Endothelial cell of umbilical vein (primary cell): ENCODE measurements at regions of chr12 and their contacts with region 1.

Region 1: GRCh38 chr12:54526812-54527630 is 22.4 kb upstream of the PDE1B start:
- DNase-seq: peak; percentile 40
- H3K4me3 ChIP-seq: no peak overlapping the region
- H3K27ac ChIP-seq: no peak overlapping the region
- H3K4me1 ChIP-seq: no peaks in the 10 kb centered on the region
- H3K27me3 ChIP-seq: peaks cover 32 to 34% of the 10 kb centered on the region in 2 experiments
- CTCF ChIP-seq: peak; percentile 69
- POLR2A ChIP-seq: no peak

Region 2: DNA sequence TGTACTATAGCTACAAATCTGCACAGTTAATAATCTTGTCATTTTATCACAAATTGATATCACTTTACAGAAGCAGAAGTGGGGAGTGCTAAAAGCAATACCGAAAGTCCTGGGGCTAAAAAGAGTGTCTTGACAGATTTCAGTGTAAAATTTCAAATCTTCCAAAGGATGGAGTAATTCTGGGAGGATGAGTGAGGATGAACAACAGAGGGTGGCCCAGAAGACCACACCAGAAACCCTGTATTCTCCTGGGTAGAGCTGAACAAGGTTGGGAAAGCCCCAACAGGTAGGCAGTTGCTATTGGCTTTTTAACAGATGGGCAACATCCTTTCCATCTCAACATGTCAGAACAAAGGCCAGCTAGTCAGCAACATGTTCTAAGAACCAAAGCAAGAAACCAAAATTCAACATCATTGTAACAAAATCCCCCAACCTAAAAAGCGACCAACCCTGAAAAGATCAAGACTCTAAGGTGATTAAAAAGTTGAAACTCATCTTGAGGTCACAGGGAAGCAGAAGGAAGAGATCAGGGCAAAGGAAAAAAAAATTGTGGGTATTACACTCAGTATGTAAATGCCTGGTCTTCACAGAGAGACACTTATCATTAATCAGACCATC is 285.9 kb before region 1 on chr12:
- CTCF ChIA-PET with region 1: no interaction called
- POLR2A ChIA-PET with region 1: no interaction called
- dilution Hi-C with region 1: no loop called
- intact Hi-C with region 1: no loop called
- DNase-seq: no peak
- H3K4me3 ChIP-seq: no peak overlapping the region
- H3K27ac ChIP-seq: no peak overlapping the region
- H3K4me1 ChIP-seq: no peaks in the 10 kb centered on the region
- H3K27me3 ChIP-seq: no peaks in the 10 kb centered on the region
- CTCF ChIP-seq: no peak
- POLR2A ChIP-seq: no peak

Region 3: GRCh38 chr12:54538136-54538700 is 11.2 kb after region 1 on chr12:
- CTCF ChIA-PET with region 1: interaction called, 10 read pairs
- POLR2A ChIA-PET with region 1: no interaction called
- dilution Hi-C with region 1: no loop called
- intact Hi-C with region 1: no loop called
- DNase-seq: no peak
- H3K4me3 ChIP-seq: no peak overlapping the region
- H3K27ac ChIP-seq: no peak overlapping the region
- H3K4me1 ChIP-seq: no peaks in the 10 kb centered on the region
- H3K27me3 ChIP-seq: peaks cover 11 to 14% of the 10 kb centered on the region in 2 experiments
- CTCF ChIP-seq: no peak
- POLR2A ChIP-seq: no peak

Region 4: GRCh38 chr12:54549774-54550451 is 22.9 kb after region 1 on chr12:
- CTCF ChIA-PET with region 1: interaction called, 10 read pairs
- POLR2A ChIA-PET with region 1: no interaction called
- dilution Hi-C with region 1: no loop called
- intact Hi-C with region 1: no loop called
- DNase-seq: peak; percentile 2
- H3K4me3 ChIP-seq: no peak overlapping the region
- H3K27ac ChIP-seq: no peak overlapping the region
- H3K4me1 ChIP-seq: no peaks in the 10 kb centered on the region
- H3K27me3 ChIP-seq: peaks cover 58 to 62% of the 10 kb centered on the region in 2 experiments
- CTCF ChIP-seq: no peak
- POLR2A ChIP-seq: no peak